Activated naive CD4-positive, alpha-beta T cell treated with anti-CD3 and anti-CD28 coated beads for 36 hours (primary cell): ENCODE measurements at regions of chr17 and their contacts with region 1.

Region 1: GRCh38 chr17:20226814-20227482 is 217.8 kb downstream of the SPECC1 start:
- DNase-seq: peak; percentile 89
- H3K4me3 Mint-ChIP-seq: no peak overlapping the region
- H3K27ac Mint-ChIP-seq: no peak overlapping the region
- H3K4me1 Mint-ChIP-seq: peaks cover 19% of the 10 kb centered on the region
- H3K27me3 Mint-ChIP-seq: no peaks in the 10 kb centered on the region

Region 2: DNA sequence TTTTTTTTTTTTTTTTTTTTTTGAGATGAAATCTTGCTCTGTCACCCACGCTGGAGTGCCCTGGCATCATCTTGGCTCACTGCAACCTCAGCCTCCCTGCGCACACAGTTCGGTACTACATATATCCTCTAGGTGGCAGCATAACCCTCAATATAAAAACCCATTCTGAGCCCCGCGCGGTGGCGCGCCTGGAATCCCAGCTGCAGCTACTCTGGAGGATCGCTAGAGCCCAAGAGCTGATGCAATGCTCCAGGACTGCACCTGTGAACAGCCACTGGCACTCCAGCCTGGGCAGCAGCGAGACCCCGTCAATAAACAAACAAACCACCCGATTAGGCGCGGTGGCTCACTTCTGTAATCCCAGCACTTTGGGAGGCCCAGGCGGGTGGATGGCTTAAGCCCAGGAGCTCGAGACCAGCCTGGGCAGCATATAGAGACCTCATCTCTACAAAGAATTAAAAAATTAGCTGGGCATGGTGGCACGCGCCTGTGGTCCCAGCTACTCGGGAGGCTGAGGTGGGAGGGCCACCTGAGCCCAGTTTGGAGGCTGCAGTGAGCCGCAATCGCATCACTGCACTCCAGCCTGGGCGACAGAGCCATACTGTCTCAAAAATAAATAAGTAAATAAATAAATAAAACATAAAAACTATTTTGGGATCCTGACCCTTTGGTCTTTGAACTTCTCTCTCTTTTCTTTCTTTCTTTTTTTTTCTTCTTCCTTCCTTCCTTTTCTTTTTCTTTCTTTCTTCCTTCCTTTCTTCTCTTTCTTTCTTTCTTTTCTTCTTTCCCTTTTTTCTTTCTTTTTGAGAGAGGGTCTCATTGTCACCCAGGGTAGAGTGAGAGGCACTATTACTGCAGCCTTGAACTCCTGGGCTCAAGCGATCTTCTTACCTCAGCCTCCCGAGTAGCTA is 233.9 kb before region 1 on chr17:
- CTCF ChIA-PET with region 1: interaction called, 17 read pairs
- intact Hi-C with region 1: loop called (anchors 2 kb)
- DNase-seq: peak; percentile 84
- H3K4me3 Mint-ChIP-seq: peak overlapping the region; percentile 26
- H3K27ac Mint-ChIP-seq: peak overlapping the region; percentile 19
- H3K4me1 Mint-ChIP-seq: peaks cover 8% of the 10 kb centered on the region
- H3K27me3 Mint-ChIP-seq: peaks cover 3% of the 10 kb centered on the region

Region 3: GRCh38 chr17:20206068-20206467 is 20.9 kb before region 1 on chr17:
- CTCF ChIA-PET with region 1: interaction called, 10 read pairs
- intact Hi-C with region 1: no loop called
- DNase-seq: peak; percentile 77
- H3K4me3 Mint-ChIP-seq: no peak overlapping the region
- H3K27ac Mint-ChIP-seq: no peak overlapping the region
- H3K4me1 Mint-ChIP-seq: peaks cover 28% of the 10 kb centered on the region
- H3K27me3 Mint-ChIP-seq: no peaks in the 10 kb centered on the region

Region 4: DNA sequence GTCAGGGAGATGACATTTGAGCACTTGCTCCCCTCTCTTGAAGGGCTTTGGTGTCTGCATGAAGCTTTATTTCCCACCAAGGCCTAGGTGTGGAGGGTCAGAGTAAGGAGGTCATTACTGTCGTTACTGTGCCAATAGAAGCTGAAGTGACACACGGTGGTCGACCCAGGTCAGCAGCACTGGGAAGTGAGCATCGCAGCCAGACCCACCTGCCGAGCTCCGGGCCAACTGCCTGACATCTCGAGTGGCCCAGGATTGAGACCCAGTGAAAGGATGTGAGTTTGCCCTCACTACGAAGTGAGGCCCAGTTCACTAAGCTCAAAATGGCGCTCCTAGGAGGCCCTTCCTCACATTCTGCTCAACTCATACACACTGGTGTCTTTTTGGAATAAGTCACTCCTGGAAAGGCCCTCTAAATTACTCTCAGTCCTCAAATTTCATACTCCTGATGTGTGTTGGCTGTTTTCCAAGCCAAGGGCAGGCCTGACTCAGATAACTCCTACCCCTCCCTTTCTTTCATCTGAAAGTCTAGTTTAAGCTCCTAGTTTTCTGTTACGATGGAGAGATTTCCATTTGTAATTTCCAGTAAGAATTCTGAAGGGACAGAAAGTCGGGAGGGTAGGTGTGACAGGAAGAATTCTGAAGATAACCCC is 40.0 kb after region 1 on chr17:
- CTCF ChIA-PET with region 1: interaction called, 15 read pairs
- intact Hi-C with region 1: no loop called
- DNase-seq: peak; percentile 33
- H3K4me3 Mint-ChIP-seq: no peak overlapping the region
- H3K27ac Mint-ChIP-seq: peak overlapping the region; percentile 63
- H3K4me1 Mint-ChIP-seq: peaks cover 76% of the 10 kb centered on the region
- H3K27me3 Mint-ChIP-seq: no peaks in the 10 kb centered on the region

Region 5: DNA sequence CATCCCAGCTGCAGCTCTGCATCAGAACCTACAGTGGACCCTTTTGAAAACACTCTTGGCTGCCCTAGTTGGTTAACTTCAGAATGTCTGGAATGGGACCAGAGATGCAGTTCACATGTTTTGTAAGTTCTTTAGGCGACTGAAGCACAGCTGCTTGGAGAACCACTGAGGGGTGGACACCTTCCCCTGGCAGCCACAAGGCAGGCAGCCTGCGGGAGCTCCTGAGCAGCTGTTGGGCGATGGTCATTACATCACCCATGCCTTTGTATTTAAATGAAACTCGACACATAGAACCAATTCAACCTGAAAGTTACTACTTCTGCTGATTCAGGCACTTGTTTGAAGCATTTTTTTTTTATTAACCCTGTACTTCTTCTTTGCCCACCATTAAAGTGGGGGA is 88.9 kb after region 1 on chr17:
- CTCF ChIA-PET with region 1: interaction called, 37 read pairs
- intact Hi-C with region 1: loop called (anchors 1 kb)
- DNase-seq: no peak
- H3K4me3 Mint-ChIP-seq: no peak overlapping the region
- H3K27ac Mint-ChIP-seq: no peak overlapping the region
- H3K4me1 Mint-ChIP-seq: peaks cover under 1% of the 10 kb centered on the region
- H3K27me3 Mint-ChIP-seq: no peaks in the 10 kb centered on the region